Activated naive CD4-positive, alpha-beta T cell treated with anti-CD3 and anti-CD28 coated beads for 36 hours (primary cell): ENCODE measurements at regions of chr7 and their contacts with region 1.

Region 1: GRCh38 chr7:105673367-105674142 is 92.3 kb upstream of the EFCAB10 start:
- DNase-seq: peak; percentile 24
- H3K4me3 Mint-ChIP-seq: no peak overlapping the region
- H3K27ac Mint-ChIP-seq: peak overlapping the region; percentile 76
- H3K4me1 Mint-ChIP-seq: peaks cover 61% of the 10 kb centered on the region
- H3K27me3 Mint-ChIP-seq: no peaks in the 10 kb centered on the region

Region 2: GRCh38 chr7:106031300-106032035 is 357.9 kb after region 1 on chr7:
- CTCF ChIA-PET with region 1: no interaction called
- intact Hi-C with region 1: loop called (anchors 1 kb)
- DNase-seq: peak; percentile 38
- H3K4me3 Mint-ChIP-seq: no peak overlapping the region
- H3K27ac Mint-ChIP-seq: no peak overlapping the region
- H3K4me1 Mint-ChIP-seq: peaks cover 28% of the 10 kb centered on the region
- H3K27me3 Mint-ChIP-seq: no peaks in the 10 kb centered on the region